CD4-positive, alpha-beta T cell (primary cell): ENCODE measurements at regions of chr15 and their contacts with region 1.

Region 1: DNA sequence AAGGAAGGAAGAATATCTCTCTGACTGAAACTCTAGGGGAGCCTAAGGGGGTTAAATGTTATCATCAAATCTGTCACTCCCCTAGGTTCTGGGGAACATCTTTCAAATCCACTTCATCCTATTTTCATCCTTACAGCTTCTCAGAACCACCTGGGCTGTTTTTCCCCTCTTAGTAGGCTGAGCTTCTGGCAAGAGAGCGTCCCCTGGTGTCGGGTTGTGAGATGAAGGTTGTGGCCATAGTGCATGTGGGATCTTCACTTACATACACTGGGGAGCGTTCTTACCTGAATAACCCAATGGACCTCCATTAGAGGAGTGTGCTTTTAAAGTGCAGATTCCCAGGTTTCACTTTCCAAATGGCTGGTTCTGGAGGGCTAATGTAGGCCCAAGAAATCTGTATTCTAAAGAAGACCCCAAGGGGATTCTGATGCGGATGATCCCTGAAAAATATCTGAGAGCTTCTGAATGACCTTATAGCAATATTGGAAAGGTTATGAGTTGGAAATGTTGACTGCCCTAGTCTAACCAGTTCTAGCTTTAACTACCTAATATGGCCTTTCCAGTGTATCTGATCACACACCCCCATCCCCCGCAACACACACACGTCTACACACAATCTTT is 663.7 kb downstream of the AGBL1 start:
- DNase-seq: peak; percentile 17 to 74 (median 40)
- ATAC-seq: no peak
- H3K4me3 ChIP-seq: no peak overlapping the region
- H3K4me3 Mint-ChIP-seq: no peak overlapping the region
- H3K27ac ChIP-seq: no peak overlapping the region
- H3K27ac Mint-ChIP-seq: no peak overlapping the region
- H3K4me1 ChIP-seq: no peaks in the 10 kb centered on the region
- H3K4me1 Mint-ChIP-seq: no peaks in the 10 kb centered on the region
- H3K27me3 ChIP-seq: no peaks in the 10 kb centered on the region
- H3K27me3 Mint-ChIP-seq: no peaks in the 10 kb centered on the region
- CTCF ChIP-seq: peak; percentile 68

Region 2: GRCh38 chr15:85858586-85859375 is 884.6 kb before region 1 on chr15:
- CTCF ChIA-PET with region 1: interaction called, 7 read pairs
- POLR2A ChIA-PET with region 1: no interaction called
- intact Hi-C with region 1: loop called (anchors 2 to 5 kb)
- DNase-seq: peak; percentile 55 to 85 (median 70)
- ATAC-seq: peak; percentile 85
- H3K4me3 ChIP-seq: no peak overlapping the region
- H3K4me3 Mint-ChIP-seq: peak overlapping the region; percentile 44
- H3K27ac ChIP-seq: no peak overlapping the region
- H3K27ac Mint-ChIP-seq: no peak overlapping the region
- H3K4me1 ChIP-seq: peaks cover 7% of the 10 kb centered on the region
- H3K4me1 Mint-ChIP-seq: peaks cover 10% of the 10 kb centered on the region
- H3K27me3 ChIP-seq: peaks cover 0 to 4% of the 10 kb centered on the region in 2 experiments
- H3K27me3 Mint-ChIP-seq: peaks cover 33% of the 10 kb centered on the region
- CTCF ChIP-seq: peak; percentile 71

Region 3: GRCh38 chr15:85865070-85865684 is 878.2 kb before region 1 on chr15:
- CTCF ChIA-PET with region 1: interaction called, 4 read pairs
- POLR2A ChIA-PET with region 1: no interaction called
- intact Hi-C with region 1: loop called in 1 of 2 experiments (anchors 2 kb)
- DNase-seq: peak in 4 of 14 experiments; percentile 4 to 50 (median 20)
- ATAC-seq: no peak
- H3K4me3 ChIP-seq: no peak overlapping the region
- H3K4me3 Mint-ChIP-seq: no peak overlapping the region
- H3K27ac ChIP-seq: no peak overlapping the region
- H3K27ac Mint-ChIP-seq: no peak overlapping the region
- H3K4me1 ChIP-seq: no peaks in the 10 kb centered on the region
- H3K4me1 Mint-ChIP-seq: peaks cover 10% of the 10 kb centered on the region
- H3K27me3 ChIP-seq: peaks cover 0 to 2% of the 10 kb centered on the region in 2 experiments
- H3K27me3 Mint-ChIP-seq: peaks cover 4% of the 10 kb centered on the region
- CTCF ChIP-seq: peak; percentile 27

Region 4: GRCh38 chr15:86213420-86214287 is 529.7 kb before region 1 on chr15:
- CTCF ChIA-PET with region 1: no interaction called
- POLR2A ChIA-PET with region 1: no interaction called
- intact Hi-C with region 1: no loop called
- DNase-seq: no peak
- ATAC-seq: no peak
- H3K4me3 ChIP-seq: no peak overlapping the region
- H3K4me3 Mint-ChIP-seq: no peak overlapping the region
- H3K27ac ChIP-seq: no peak overlapping the region
- H3K27ac Mint-ChIP-seq: no peak overlapping the region
- H3K4me1 ChIP-seq: no peaks in the 10 kb centered on the region
- H3K4me1 Mint-ChIP-seq: no peaks in the 10 kb centered on the region
- H3K27me3 ChIP-seq: peaks cover 0 to 7% of the 10 kb centered on the region in 2 experiments
- H3K27me3 Mint-ChIP-seq: peaks cover 39% of the 10 kb centered on the region
- CTCF ChIP-seq: no peak

Region 5: DNA sequence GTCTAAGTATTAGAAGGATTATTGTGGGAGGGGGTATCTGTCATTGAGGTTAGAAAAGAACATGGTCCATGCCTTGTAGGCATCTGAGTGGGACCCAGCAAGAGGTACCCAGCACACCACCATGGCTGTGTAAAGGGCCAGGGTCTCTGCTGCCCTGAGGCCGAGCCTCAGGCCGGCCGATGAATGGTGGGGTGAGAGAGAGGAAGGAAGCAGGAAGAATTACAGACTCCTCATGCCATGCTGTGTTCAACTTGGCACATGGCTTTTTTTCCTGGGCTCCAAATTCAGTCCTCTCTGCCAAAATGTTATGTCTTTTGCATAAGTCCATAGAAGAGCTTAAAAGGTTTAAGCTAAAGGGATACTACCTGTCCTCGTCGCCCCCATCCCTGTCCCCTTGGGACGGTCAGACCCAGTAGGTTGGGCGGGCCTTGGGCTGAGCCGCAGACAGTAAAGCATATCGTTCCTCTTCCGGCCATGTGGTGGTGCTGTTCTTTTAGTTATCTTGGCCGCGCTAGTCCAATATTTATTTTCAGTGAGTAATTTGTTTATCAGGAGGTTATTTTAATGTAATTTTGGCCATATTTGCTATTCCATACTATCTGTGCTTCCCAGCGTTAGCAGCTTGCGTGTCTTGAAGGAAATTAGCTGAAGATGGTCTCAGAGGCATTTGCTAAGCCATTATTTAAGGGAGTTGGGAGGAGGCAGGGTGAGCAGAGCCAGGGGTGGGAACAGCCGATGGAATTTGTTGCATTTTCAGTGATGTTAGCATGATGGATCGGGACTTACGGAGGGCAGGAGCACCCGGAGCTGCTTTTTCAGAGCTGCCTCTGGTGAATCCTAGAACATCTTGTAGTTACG is 511.3 kb before region 1 on chr15:
- CTCF ChIA-PET with region 1: interaction called, 5 read pairs
- POLR2A ChIA-PET with region 1: no interaction called
- intact Hi-C with region 1: loop called in 1 of 2 experiments (anchors 2 kb)
- DNase-seq: peak in 12 of 14 experiments; percentile 2 to 65 (median 17)
- ATAC-seq: no peak
- H3K4me3 ChIP-seq: no peak overlapping the region
- H3K4me3 Mint-ChIP-seq: no peak overlapping the region
- H3K27ac ChIP-seq: no peak overlapping the region
- H3K27ac Mint-ChIP-seq: no peak overlapping the region
- H3K4me1 ChIP-seq: peaks cover 5% of the 10 kb centered on the region
- H3K4me1 Mint-ChIP-seq: peaks cover 5% of the 10 kb centered on the region
- H3K27me3 ChIP-seq: peaks cover 6 to 20% of the 10 kb centered on the region in 2 experiments
- H3K27me3 Mint-ChIP-seq: peaks cover 61% of the 10 kb centered on the region
- CTCF ChIP-seq: peak; percentile 59

Region 6: DNA sequence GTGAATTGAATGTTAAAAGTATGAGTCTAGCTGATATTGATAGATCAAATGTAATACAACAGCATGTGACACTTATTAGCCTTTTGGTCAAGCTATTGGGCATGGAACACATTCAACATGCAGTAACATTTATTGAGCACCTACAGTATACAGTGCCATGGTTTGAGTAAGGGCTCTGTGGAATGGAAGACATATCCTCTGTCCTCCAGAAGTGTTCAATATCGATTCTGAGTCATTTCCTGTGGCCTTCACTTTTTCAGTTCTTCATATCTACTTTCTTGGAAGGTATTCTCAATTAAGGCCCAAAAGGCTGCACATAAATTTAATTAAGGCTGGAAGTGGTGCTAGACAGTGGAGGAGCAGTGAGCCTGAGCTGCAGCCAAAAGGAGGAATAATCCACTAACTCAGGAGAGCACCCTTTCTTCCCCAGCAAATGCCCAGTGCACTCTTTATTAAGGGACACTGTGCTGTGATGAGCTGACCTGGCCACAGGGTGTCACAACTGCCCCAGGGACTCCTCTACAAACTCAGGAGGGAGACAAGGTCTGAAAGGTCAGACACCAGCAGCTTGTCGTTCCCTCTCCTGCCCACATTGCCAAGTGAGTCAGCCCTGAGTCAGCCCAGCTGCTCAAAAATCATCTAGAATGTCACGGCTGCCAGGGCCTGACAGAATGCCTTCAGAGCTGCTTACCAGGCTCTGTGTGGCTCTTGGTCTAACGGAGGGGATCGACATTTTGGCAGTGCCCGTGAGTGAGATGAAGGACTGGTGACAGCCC is 118.9 kb before region 1 on chr15:
- CTCF ChIA-PET with region 1: interaction called, 6 read pairs
- POLR2A ChIA-PET with region 1: no interaction called
- intact Hi-C with region 1: loop called (anchors 5 to 10 kb)
- DNase-seq: peak; percentile 1 to 68 (median 42)
- ATAC-seq: peak; percentile 58
- H3K4me3 ChIP-seq: no peak overlapping the region
- H3K4me3 Mint-ChIP-seq: no peak overlapping the region
- H3K27ac ChIP-seq: no peak overlapping the region
- H3K27ac Mint-ChIP-seq: no peak overlapping the region
- H3K4me1 ChIP-seq: peaks cover 15% of the 10 kb centered on the region
- H3K4me1 Mint-ChIP-seq: peaks cover 38% of the 10 kb centered on the region
- H3K27me3 ChIP-seq: no peaks in the 10 kb centered on the region
- H3K27me3 Mint-ChIP-seq: no peaks in the 10 kb centered on the region
- CTCF ChIP-seq: no peak

Region 7: GRCh38 chr15:86663333-86663732 is 80.1 kb before region 1 on chr15:
- CTCF ChIA-PET with region 1: no interaction called
- POLR2A ChIA-PET with region 1: no interaction called
- intact Hi-C with region 1: no loop called
- DNase-seq: peak in 3 of 14 experiments; percentile 7 to 24 (median 13)
- ATAC-seq: no peak
- H3K4me3 ChIP-seq: no peak overlapping the region
- H3K4me3 Mint-ChIP-seq: no peak overlapping the region
- H3K27ac ChIP-seq: no peak overlapping the region
- H3K27ac Mint-ChIP-seq: no peak overlapping the region
- H3K4me1 ChIP-seq: no peaks in the 10 kb centered on the region
- H3K4me1 Mint-ChIP-seq: peaks cover 22% of the 10 kb centered on the region
- H3K27me3 ChIP-seq: no peaks in the 10 kb centered on the region
- H3K27me3 Mint-ChIP-seq: no peaks in the 10 kb centered on the region
- CTCF ChIP-seq: no peak